Endothelial cell of umbilical vein (primary cell): ENCODE measurements at regions of chr5 and their contacts with region 1.

Region 1: DNA sequence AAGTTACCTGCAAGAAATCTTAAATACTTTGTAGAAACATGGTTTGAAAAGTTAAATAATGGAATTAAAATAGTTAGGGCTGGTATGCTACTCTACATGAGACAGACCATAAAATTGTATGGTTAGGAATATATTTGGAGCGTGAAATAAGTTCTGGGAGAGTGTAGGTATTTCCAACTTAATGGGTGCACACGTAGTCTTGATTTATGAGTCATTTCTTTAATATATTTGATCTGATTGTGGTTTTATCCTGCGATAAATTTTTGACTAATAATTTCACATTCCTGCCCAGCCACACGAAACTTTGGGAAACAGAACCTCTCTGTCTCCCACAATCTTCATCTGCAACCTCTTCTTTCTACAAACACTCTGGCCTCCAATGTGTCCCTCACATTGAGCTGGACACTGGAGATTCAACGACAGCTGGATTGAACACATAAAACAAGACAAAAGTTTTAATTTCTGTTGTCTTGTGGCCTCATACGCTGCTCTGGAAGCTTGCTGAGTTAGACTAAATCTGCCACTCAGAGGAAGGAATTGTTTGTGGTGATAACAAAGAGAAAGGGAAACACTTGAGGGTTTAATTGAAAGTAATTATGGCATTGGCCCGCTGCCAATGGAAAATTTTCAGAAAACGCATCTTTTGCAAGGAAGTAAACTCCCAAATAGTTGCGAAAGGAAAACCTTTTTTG is 201.8 kb upstream of the ZNF608 start:
- DNase-seq: peak; percentile 90
- H3K4me3 ChIP-seq: no peak overlapping the region
- H3K27ac ChIP-seq: no peak overlapping the region
- H3K4me1 ChIP-seq: peaks cover 9% of the 10 kb centered on the region
- H3K27me3 ChIP-seq: no peaks in the 10 kb centered on the region
- CTCF ChIP-seq: no peak
- POLR2A ChIP-seq: no peak

Region 2: DNA sequence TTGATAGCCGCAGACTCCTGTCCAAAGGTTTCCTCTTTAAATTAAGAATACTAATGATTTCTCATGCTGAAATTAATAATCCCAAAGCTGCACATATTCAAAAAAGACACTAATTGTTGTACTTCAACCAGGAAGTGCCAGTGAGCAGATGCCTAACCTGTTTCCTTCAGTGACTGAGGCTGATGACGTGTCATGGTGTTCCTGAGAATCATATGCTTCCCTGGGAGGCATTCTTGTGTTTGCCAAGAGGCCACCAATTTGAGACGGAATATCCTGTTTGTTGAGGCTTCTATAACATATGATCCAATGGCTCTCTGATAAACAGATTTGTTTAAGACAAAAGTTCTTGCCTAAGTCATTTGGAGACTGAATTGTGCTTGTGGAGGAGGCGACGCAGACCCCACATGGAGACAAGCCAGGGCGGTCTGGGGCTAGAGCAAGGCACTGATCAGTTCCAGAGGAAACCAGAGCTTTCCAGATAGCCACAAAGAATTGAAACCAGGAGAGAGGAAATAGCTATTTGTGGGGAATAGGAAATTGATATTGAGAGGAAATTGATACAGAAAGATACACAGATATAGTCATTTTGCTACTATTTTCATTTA is 135.4 kb before region 1 on chr5:
- CTCF ChIA-PET with region 1: interaction called, 3 read pairs
- POLR2A ChIA-PET with region 1: no interaction called
- dilution Hi-C with region 1: no loop called
- intact Hi-C with region 1: loop called (anchors 5 kb)
- DNase-seq: peak; percentile 82
- H3K4me3 ChIP-seq: no peak overlapping the region
- H3K27ac ChIP-seq: peak overlapping the region; percentile 81
- H3K4me1 ChIP-seq: peaks cover 10% of the 10 kb centered on the region
- H3K27me3 ChIP-seq: no peaks in the 10 kb centered on the region
- CTCF ChIP-seq: no peak
- POLR2A ChIP-seq: no peak

Region 3: GRCh38 chr5:124923131-124923530 is 25.1 kb before region 1 on chr5:
- CTCF ChIA-PET with region 1: no interaction called
- POLR2A ChIA-PET with region 1: no interaction called
- dilution Hi-C with region 1: no loop called
- intact Hi-C with region 1: loop called (anchors 2 kb)
- DNase-seq: peak; percentile 90
- H3K4me3 ChIP-seq: no peak overlapping the region
- H3K27ac ChIP-seq: peak overlapping the region; percentile 8
- H3K4me1 ChIP-seq: no peaks in the 10 kb centered on the region
- H3K27me3 ChIP-seq: no peaks in the 10 kb centered on the region
- CTCF ChIP-seq: no peak
- POLR2A ChIP-seq: no peak